Activated B cell treated with CpG ODN at 0.5 μM for 24 hours (primary cell): ENCODE measurements at regions of chr1 and their contacts with region 1.

Region 1: GRCh38 chr1:101288491-101288944 is 51.7 kb downstream of the S1PR1 start:
- DNase-seq: no peak
- ATAC-seq: peak; percentile 62
- H3K4me3 Mint-ChIP-seq: no peak overlapping the region
- H3K27ac Mint-ChIP-seq: no peak overlapping the region
- H3K4me1 Mint-ChIP-seq: peaks cover 50% of the 10 kb centered on the region
- H3K27me3 Mint-ChIP-seq: no peaks in the 10 kb centered on the region
- CTCF ChIP-seq: peak; percentile 97

Region 2: GRCh38 chr1:100834777-100835660 is 453.5 kb before region 1 on chr1:
- CTCF ChIA-PET with region 1: no interaction called
- POLR2A ChIA-PET with region 1: no interaction called
- intact Hi-C with region 1: loop called (anchors 1 kb)
- DNase-seq: no peak
- ATAC-seq: no peak
- H3K4me3 Mint-ChIP-seq: no peak overlapping the region
- H3K27ac Mint-ChIP-seq: no peak overlapping the region
- H3K4me1 Mint-ChIP-seq: no peaks in the 10 kb centered on the region
- H3K27me3 Mint-ChIP-seq: peaks cover 2% of the 10 kb centered on the region
- CTCF ChIP-seq: no peak

Region 3: GRCh38 chr1:100931716-100932115 is 356.8 kb before region 1 on chr1:
- CTCF ChIA-PET with region 1: interaction called, 130 read pairs
- POLR2A ChIA-PET with region 1: no interaction called
- intact Hi-C with region 1: loop called (anchors 2 kb)
- DNase-seq: no peak
- ATAC-seq: no peak
- H3K4me3 Mint-ChIP-seq: no peak overlapping the region
- H3K27ac Mint-ChIP-seq: no peak overlapping the region
- H3K4me1 Mint-ChIP-seq: peaks cover 18% of the 10 kb centered on the region
- H3K27me3 Mint-ChIP-seq: no peaks in the 10 kb centered on the region
- CTCF ChIP-seq: no peak

Region 4: DNA sequence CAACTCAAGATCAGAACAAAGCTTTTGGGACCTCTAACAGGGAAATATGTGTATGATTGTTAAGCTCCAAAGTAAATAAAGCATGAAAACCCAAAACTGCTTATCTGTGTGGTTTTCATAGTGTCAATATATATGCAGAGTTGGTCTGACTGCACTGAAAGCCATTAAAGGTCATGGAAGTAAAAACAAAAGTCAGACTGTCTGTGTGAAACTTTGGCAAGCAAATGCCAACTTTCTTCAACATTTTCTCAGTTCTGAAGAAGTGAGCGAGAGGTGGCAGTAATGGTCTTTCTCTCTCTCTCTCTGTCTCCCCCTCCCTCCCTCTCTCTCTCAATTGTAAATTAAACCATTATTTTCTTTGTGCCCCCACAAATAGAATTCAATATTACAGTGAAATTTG is 151.8 kb before region 1 on chr1:
- CTCF ChIA-PET with region 1: interaction called, 112 read pairs
- POLR2A ChIA-PET with region 1: interaction called, 4 read pairs
- intact Hi-C with region 1: loop called (anchors 1 kb)
- DNase-seq: no peak
- ATAC-seq: peak; percentile 80
- H3K4me3 Mint-ChIP-seq: peak overlapping the region; percentile 12
- H3K27ac Mint-ChIP-seq: peak overlapping the region; percentile 10
- H3K4me1 Mint-ChIP-seq: peaks cover 52% of the 10 kb centered on the region
- H3K27me3 Mint-ChIP-seq: no peaks in the 10 kb centered on the region
- CTCF ChIP-seq: no peak

Region 5: DNA sequence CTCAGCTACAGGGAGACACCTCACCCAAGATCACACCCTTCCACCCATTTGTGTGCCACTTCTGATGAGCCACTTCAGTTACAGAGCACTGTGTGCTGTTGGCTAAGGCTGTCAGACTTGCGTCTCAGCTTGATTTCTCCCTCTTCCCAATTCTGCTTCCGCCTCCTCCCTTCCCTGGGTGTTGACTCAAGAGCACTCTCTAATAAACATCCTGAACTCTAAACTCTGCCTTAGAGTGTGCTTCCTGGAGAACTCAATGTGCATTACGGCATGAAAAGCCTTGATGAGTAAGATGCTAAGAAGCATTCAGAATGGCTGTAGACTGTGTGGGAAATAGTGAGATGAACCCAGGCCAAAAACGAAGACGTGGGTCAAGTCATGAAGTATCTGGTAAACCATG is 106.6 kb before region 1 on chr1:
- CTCF ChIA-PET with region 1: no interaction called
- POLR2A ChIA-PET with region 1: no interaction called
- intact Hi-C with region 1: no loop called
- DNase-seq: no peak
- ATAC-seq: no peak
- H3K4me3 Mint-ChIP-seq: no peak overlapping the region
- H3K27ac Mint-ChIP-seq: no peak overlapping the region
- H3K4me1 Mint-ChIP-seq: peaks cover 19% of the 10 kb centered on the region
- H3K27me3 Mint-ChIP-seq: no peaks in the 10 kb centered on the region
- CTCF ChIP-seq: no peak

Region 6: GRCh38 chr1:101257500-101258325 is 30.8 kb before region 1 on chr1:
- CTCF ChIA-PET with region 1: interaction called, 24 read pairs
- POLR2A ChIA-PET with region 1: interaction called, 3 read pairs
- intact Hi-C with region 1: loop called (anchors 2 kb)
- DNase-seq: no peak
- ATAC-seq: peak; percentile 61
- H3K4me3 Mint-ChIP-seq: no peak overlapping the region
- H3K27ac Mint-ChIP-seq: peak overlapping the region; percentile 42
- H3K4me1 Mint-ChIP-seq: peaks cover 51% of the 10 kb centered on the region
- H3K27me3 Mint-ChIP-seq: no peaks in the 10 kb centered on the region
- CTCF ChIP-seq: no peak

Region 7: GRCh38 chr1:101410048-101410878 is 121.7 kb after region 1 on chr1:
- CTCF ChIA-PET with region 1: interaction called, 3 read pairs
- POLR2A ChIA-PET with region 1: interaction called, 12 read pairs
- intact Hi-C with region 1: no loop called
- DNase-seq: no peak
- ATAC-seq: peak; percentile 33
- H3K4me3 Mint-ChIP-seq: peak overlapping the region; percentile 64
- H3K27ac Mint-ChIP-seq: peak overlapping the region; percentile 74
- H3K4me1 Mint-ChIP-seq: peaks cover 75% of the 10 kb centered on the region
- H3K27me3 Mint-ChIP-seq: no peaks in the 10 kb centered on the region
- CTCF ChIP-seq: no peak